Posterior cingulate gyrus (tissue), 11 donors: ENCODE measurements at regions of chr16 and their contacts with region 1.

Region 1: DNA sequence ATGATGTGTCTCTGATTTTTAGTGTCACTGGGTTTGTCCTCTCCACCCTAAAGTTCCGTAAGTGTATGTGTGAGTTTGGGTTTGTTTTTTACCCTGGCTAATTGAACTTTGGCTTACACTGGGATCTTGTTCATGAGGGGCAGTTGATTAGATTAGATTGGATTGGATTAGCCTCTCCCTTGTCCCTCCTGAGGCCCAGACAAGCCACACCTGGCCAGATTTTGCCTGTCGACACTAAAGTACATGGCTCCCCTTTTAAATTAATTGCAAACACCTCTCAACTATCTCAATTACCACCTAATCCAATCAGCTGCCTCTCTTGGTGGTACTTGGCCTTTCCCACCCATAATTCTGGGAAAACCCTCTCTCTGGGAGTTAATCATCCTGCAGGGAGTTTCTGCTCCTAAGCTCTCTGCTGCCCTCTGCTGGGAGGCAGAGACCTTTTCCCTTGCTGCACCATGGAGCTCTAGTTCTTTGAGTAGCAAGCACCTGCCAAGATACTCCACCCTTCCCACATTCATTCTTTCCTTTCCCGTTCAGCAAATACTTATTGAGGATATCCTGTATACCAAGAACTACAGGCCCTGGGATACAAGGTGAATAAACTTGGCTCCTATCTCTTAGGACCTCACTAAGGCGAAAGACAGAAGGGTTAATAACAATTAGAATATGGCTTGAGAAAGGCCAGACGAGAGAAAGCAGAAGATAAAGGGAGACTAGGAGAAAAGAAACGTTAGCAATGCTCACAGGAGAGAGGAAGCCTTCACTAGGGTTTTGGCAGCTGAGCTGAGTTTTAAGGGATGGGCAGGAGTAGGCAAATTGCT is 60.0 kb upstream of the MPHOSPH6 start:
- DNase-seq: peak in 9 of 10 donors; percentile 30 to 95 (median 81)

Region 2: GRCh38 chr16:81891736-81892357 is 338.2 kb before region 1 on chr16:
- intact Hi-C with region 1: loop called (anchors 2 kb)
- DNase-seq: no peak

Region 3: GRCh38 chr16:81940781-81941560 is 289.0 kb before region 1 on chr16:
- intact Hi-C with region 1: loop called (anchors 5 kb)
- DNase-seq: no peak

Region 4: GRCh38 chr16:82031116-82032084 is 198.6 kb before region 1 on chr16:
- intact Hi-C with region 1: loop called (anchors 1 kb)
- DNase-seq: no peak

Region 5: GRCh38 chr16:82111944-82112343 is 118.1 kb before region 1 on chr16:
- intact Hi-C with region 1: no loop called
- DNase-seq: no peak